Gastrocnemius medialis (tissue), 4 donors: ENCODE measurements at regions of chr3 and their contacts with region 1.

Region 1: GRCh38 chr3:150408221-150409102 is at the start of gene TSC22D2:
- DNase-seq: peak; percentile 90 to 93
- ATAC-seq: peak; percentile 61 to 62
- H3K4me3 ChIP-seq: peak within 1 kb of the TSS; percentile 78 to 92 (median 85)
- H3K27ac ChIP-seq: peak within 1 kb of the TSS; percentile 99 to 100 (median 99)
- H3K4me1 ChIP-seq: peaks cover 15 to 27% of the 10 kb centered on the region in 2 donors
- H3K27me3 ChIP-seq: no peaks in the 10 kb centered on the region
- CTCF ChIP-seq: peak in 4 of 5 experiments; percentile 21 to 30 (median 22)
- POLR2A ChIP-seq: peak; percentile 98 to 99
- total RNA-seq, gene TSC22D2: 12.9 to 16.1 (median 14.0) TPM

Region 2: DNA sequence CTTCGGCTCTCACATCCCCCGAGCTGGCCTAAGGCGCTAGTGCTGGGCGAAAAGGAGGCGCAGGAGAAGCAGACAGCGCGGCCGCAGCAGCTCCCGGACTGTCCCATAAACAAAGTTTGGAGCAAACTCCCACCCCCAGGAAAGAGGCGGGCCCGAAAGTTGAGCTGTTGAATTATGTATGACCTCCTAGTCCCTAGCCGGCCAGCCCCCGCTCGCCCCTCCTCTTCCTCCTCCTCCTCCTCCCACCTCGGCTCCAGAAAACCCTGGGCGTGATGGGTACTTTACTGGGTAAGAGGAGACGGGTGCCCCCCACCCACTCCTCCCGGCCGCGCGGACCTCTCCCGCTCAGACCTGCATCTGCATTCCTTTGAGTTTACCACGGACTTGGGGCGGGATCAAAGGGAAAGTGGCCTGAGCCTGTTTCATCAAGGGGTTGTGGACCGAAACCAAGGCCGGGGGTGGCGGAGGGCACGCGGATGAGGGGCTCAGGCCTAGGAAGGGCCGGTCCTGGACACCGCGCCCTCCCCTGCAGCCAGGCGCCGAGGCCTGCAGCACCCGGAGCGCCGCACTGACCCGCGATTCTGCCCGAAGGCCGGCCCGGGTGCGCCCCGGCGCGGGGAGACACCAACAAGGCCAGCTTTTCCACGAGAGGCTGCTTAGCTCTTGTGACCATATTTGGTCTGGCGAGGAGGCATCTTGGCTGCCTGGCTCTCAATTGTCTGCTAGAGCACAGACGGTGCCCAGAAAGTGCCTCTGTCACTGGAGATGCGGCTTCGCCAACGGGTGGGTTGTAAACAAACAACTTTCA is 750.3 kb before region 1 on chr3 and contains the start of gene WWTR1:
- in situ Hi-C with region 1: no loop called
- intact Hi-C with region 1: loop called (anchors 5 kb)
- DNase-seq: peak; percentile 88 to 93
- ATAC-seq: peak; percentile 86 to 88
- H3K4me3 ChIP-seq: peak within 1 kb of the TSS; percentile 75 to 93 (median 86)
- H3K27ac ChIP-seq: peak within 1 kb of the TSS; percentile 93 to 96 (median 96)
- H3K4me1 ChIP-seq: peaks cover 36 to 38% of the 10 kb centered on the region in 2 donors
- H3K27me3 ChIP-seq: no peaks in the 10 kb centered on the region
- CTCF ChIP-seq: peak in 2 of 5 experiments; percentile 19 to 23
- POLR2A ChIP-seq: peak; percentile 87 to 97
- total RNA-seq, gene WWTR1: 11.3 to 30.7 (median 17.6) TPM

Region 3: GRCh38 chr3:149969940-149970715 is 438.3 kb before region 1 on chr3:
- in situ Hi-C with region 1: no loop called
- intact Hi-C with region 1: loop called (anchors 5 kb)
- DNase-seq: peak; percentile 75 to 90
- ATAC-seq: peak; percentile 48 to 59
- H3K4me3 ChIP-seq: peak overlapping the region; percentile 68 to 85 (median 81)
- H3K27ac ChIP-seq: peak overlapping the region; percentile 89 to 97 (median 97)
- H3K4me1 ChIP-seq: peaks cover 19 to 22% of the 10 kb centered on the region in 2 donors
- H3K27me3 ChIP-seq: no peaks in the 10 kb centered on the region
- CTCF ChIP-seq: no peak
- POLR2A ChIP-seq: peak; percentile 46 to 68

Region 4: GRCh38 chr3:150253622-150254021 is 154.8 kb before region 1 on chr3:
- in situ Hi-C with region 1: no loop called
- intact Hi-C with region 1: loop called (anchors 5 kb)
- DNase-seq: peak; percentile 24 to 66
- ATAC-seq: peak; percentile 45 to 46
- H3K4me3 ChIP-seq: no peak overlapping the region
- H3K27ac ChIP-seq: peak overlapping the region in 3 of 4 donors; percentile 78 to 89 (median 87)
- H3K4me1 ChIP-seq: peaks cover 21 to 52% of the 10 kb centered on the region in 2 donors
- H3K27me3 ChIP-seq: no peaks in the 10 kb centered on the region
- CTCF ChIP-seq: no peak
- POLR2A ChIP-seq: no peak

Region 5: DNA sequence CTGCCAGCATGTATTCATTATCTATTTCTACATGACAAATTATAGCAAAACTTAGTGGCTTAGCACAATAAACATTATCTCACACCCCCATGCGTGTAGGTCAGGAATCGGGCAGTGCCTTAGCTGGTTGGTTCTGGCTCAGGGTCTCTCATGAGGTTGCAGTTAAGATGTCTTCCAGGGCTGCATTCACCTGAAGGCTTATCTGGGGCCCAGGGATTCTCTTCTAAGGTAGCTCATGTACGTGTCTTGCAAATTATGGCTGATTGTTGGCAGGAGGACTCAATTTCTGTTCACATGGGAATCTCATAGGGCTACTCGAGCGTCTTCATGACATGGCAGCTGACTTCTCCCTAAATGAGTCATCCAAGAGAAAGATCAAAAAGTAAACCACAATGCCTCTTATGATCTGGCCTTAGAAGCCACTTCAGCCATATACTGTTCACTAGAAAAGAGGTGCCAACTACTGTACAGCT is 43.3 kb before region 1 on chr3:
- in situ Hi-C with region 1: no loop called
- intact Hi-C with region 1: no loop called
- DNase-seq: no peak
- ATAC-seq: no peak
- H3K4me3 ChIP-seq: no peak overlapping the region
- H3K27ac ChIP-seq: no peak overlapping the region
- H3K4me1 ChIP-seq: no peaks in the 10 kb centered on the region
- H3K27me3 ChIP-seq: no peaks in the 10 kb centered on the region
- CTCF ChIP-seq: no peak
- POLR2A ChIP-seq: no peak

Region 6: DNA sequence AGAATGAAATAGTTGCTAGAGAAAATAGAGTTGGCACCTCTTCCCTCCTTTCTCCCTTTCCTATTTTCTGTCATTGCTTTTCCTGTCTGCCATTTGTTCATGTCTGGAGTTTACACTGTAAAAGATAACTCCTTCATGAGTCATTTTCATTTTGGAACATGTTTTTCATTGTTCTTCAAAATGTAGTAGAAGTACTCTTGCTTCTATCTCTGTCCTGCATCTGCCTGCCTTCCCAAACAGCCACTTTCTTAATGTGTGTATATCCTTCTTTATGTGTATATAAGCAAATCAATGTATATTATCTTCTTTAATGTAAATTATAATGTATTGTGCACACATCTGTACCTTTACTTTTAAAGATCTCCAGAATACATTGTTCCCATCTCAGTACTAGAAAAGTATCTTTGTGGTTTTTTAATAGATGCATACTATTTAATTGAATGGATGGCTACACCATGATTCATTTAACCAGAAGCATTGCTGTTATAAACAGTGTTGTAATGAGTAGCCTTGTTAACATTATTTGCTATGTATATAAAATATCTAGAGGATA is 40.8 kb after region 1 on chr3:
- in situ Hi-C with region 1: no loop called
- intact Hi-C with region 1: loop called (anchors 5 kb)
- DNase-seq: no peak
- ATAC-seq: no peak
- H3K4me3 ChIP-seq: no peak overlapping the region
- H3K27ac ChIP-seq: no peak overlapping the region
- H3K4me1 ChIP-seq: peaks cover 22 to 33% of the 10 kb centered on the region in 2 donors
- H3K27me3 ChIP-seq: no peaks in the 10 kb centered on the region
- CTCF ChIP-seq: no peak
- POLR2A ChIP-seq: no peak

Region 7: GRCh38 chr3:150546226-150547044 is 138.0 kb after region 1 on chr3 and contains the starts of genes EIF2A and SERP1:
- in situ Hi-C with region 1: no loop called
- intact Hi-C with region 1: loop called (anchors 1 kb)
- DNase-seq: peak; percentile 97 to 98
- ATAC-seq: peak; percentile 93
- H3K4me3 ChIP-seq: peak within 1 kb of the TSS; percentile 79 to 98 (median 94)
- H3K27ac ChIP-seq: peak within 1 kb of the TSS; percentile 94 to 100 (median 98)
- H3K4me1 ChIP-seq: peaks cover 32 to 38% of the 10 kb centered on the region in 2 donors
- H3K27me3 ChIP-seq: no peaks in the 10 kb centered on the region
- CTCF ChIP-seq: peak in 1 of 5 experiments; percentile 5
- POLR2A ChIP-seq: peak; percentile 95 to 96
- total RNA-seq, gene EIF2A: 150 to 168 (median 163) TPM
- total RNA-seq, gene SERP1: 25.3 to 52.7 (median 36.3) TPM

Region 8: DNA sequence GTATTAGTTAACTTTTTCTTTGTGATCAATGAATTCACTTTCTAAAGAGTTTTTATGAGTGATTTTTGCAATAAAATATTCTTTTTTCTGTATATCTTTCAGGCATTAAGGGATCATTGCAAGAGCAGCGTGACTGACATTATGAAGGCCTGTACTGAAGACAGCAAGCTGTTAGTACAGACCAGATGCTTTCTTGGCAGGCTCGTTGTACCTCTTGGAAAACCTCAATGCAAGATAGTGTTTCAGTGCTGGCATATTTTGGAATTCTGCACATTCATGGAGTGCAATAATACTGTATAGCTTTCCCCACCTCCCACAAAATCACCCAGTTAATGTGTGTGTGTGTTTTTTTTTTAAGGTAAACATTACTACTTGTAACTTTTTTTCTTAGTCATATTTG is 219.1 kb after region 1 on chr3:
- in situ Hi-C with region 1: no loop called
- intact Hi-C with region 1: no loop called
- DNase-seq: peak; percentile 31 to 35
- ATAC-seq: peak; percentile 95 to 97
- H3K4me3 ChIP-seq: no peak overlapping the region
- H3K27ac ChIP-seq: peak overlapping the region; percentile 22 to 62 (median 47)
- H3K4me1 ChIP-seq: peaks cover 7 to 24% of the 10 kb centered on the region in 2 donors
- H3K27me3 ChIP-seq: no peaks in the 10 kb centered on the region
- CTCF ChIP-seq: no peak
- POLR2A ChIP-seq: no peak

Region 9: GRCh38 chr3:150763122-150763841 is 354.8 kb after region 1 on chr3 and contains the start of gene SIAH2:
- in situ Hi-C with region 1: no loop called
- intact Hi-C with region 1: loop called (anchors 5 kb)
- DNase-seq: peak; percentile 85 to 88
- ATAC-seq: peak; percentile 79 to 84
- H3K4me3 ChIP-seq: peak within 1 kb of the TSS; percentile 61 to 80 (median 65)
- H3K27ac ChIP-seq: peak within 1 kb of the TSS; percentile 92 to 99 (median 96)
- H3K4me1 ChIP-seq: peaks cover 28 to 33% of the 10 kb centered on the region in 2 donors
- H3K27me3 ChIP-seq: no peaks in the 10 kb centered on the region
- CTCF ChIP-seq: peak in 1 of 5 experiments; percentile 21
- POLR2A ChIP-seq: peak; percentile 87 to 98
- total RNA-seq, gene SIAH2: 10.9 to 25.6 (median 20.0) TPM